Gastrocnemius medialis (tissue), 4 donors: ENCODE measurements at regions of chr16 and their contacts with region 1.

Region 1: GRCh38 chr16:28491970-28492474 is at the start of gene CLN3:
- DNase-seq: peak; percentile 93 to 95
- ATAC-seq: peak; percentile 99
- H3K4me3 ChIP-seq: peak within 1 kb of the TSS; percentile 83 to 97 (median 93)
- H3K27ac ChIP-seq: peak within 1 kb of the TSS; percentile 89 to 98 (median 95)
- H3K4me1 ChIP-seq: peaks cover 0 to 11% of the 10 kb centered on the region in 2 donors
- H3K27me3 ChIP-seq: no peaks in the 10 kb centered on the region
- CTCF ChIP-seq: no peak
- POLR2A ChIP-seq: peak; percentile 37 to 46
- total RNA-seq, gene CLN3: 11.0 to 20.6 (median 18.8) TPM

Region 2: GRCh38 chr16:28548306-28548802 is 56.3 kb after region 1 on chr16:
- in situ Hi-C with region 1: loop called (anchors 5 kb)
- intact Hi-C with region 1: loop called (anchors 1 kb)
- DNase-seq: no peak
- ATAC-seq: no peak
- H3K4me3 ChIP-seq: no peak overlapping the region
- H3K27ac ChIP-seq: no peak overlapping the region
- H3K4me1 ChIP-seq: peaks cover 3 to 5% of the 10 kb centered on the region in 2 donors
- H3K27me3 ChIP-seq: no peaks in the 10 kb centered on the region
- CTCF ChIP-seq: no peak
- POLR2A ChIP-seq: no peak

Region 3: GRCh38 chr16:28553776-28554633 is 62.0 kb after region 1 on chr16 and contains the start of gene SGF29:
- in situ Hi-C with region 1: loop called (anchors 5 kb)
- intact Hi-C with region 1: loop called (anchors 1 kb)
- DNase-seq: peak; percentile 87 to 91
- ATAC-seq: peak; percentile 97 to 98
- H3K4me3 ChIP-seq: peak within 1 kb of the TSS; percentile 66 to 71 (median 70)
- H3K27ac ChIP-seq: peak within 1 kb of the TSS; percentile 92 to 94 (median 94)
- H3K4me1 ChIP-seq: peaks cover 12 to 15% of the 10 kb centered on the region in 2 donors
- H3K27me3 ChIP-seq: no peaks in the 10 kb centered on the region
- CTCF ChIP-seq: peak in 4 of 5 experiments; percentile 16 to 42 (median 30)
- POLR2A ChIP-seq: peak; percentile 89 to 96
- total RNA-seq, gene SGF29: 35.1 to 50.4 (median 41.9) TPM

Region 4: GRCh38 chr16:28617874-28618273 is 125.9 kb after region 1 on chr16:
- in situ Hi-C with region 1: loop called in 1 of 4 experiments (anchors 25 kb)
- intact Hi-C with region 1: loop called (anchors 5 kb)
- DNase-seq: no peak
- ATAC-seq: no peak
- H3K4me3 ChIP-seq: no peak overlapping the region
- H3K27ac ChIP-seq: no peak overlapping the region
- H3K4me1 ChIP-seq: peaks cover 0 to under 1% of the 10 kb centered on the region in 2 donors
- H3K27me3 ChIP-seq: no peaks in the 10 kb centered on the region
- CTCF ChIP-seq: no peak
- POLR2A ChIP-seq: no peak

Region 5: DNA sequence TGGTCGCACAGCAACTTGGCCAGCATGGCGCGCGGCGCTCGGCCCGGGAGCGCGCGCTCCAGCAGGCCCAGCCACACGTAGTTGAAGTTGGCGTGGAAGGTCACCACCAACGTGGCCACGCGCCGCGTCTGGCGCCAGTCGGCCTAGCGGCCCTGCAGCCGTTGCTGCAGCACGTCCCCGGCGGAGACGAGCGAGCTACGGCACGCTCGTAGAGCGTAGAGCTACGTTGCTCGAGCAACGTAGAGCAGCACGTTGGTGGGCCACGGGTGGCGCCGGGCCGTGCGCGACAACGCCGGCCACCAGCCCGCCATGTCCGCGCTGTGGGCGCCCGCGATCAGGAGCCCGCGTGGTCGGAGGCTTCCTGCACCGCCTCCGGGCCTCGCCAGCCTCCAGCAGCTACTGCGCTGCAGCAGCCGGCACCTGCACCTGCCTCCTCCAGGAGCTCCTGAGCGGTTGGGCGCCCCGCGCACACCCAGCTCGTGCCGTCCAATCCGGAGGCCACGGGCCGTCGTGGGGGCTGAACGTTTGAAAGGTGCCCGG is 131.2 kb after region 1 on chr16:
- in situ Hi-C with region 1: loop called in 1 of 4 experiments (anchors 25 kb)
- intact Hi-C with region 1: loop called (anchors 5 kb)
- DNase-seq: peak in 1 of 2 donors; percentile 27
- ATAC-seq: peak; percentile 80 to 89
- H3K4me3 ChIP-seq: peak overlapping the region; percentile 49 to 64 (median 51)
- H3K27ac ChIP-seq: peak overlapping the region in 2 of 4 donors; percentile 14 to 26
- H3K4me1 ChIP-seq: peaks cover 0 to 4% of the 10 kb centered on the region in 2 donors
- H3K27me3 ChIP-seq: no peaks in the 10 kb centered on the region
- CTCF ChIP-seq: no peak
- POLR2A ChIP-seq: no peak